IMR-90 (cell line): ENCODE measurements at regions of chr5 and their contacts with region 1.

Region 1: GRCh38 chr5:110371725-110372041 is 354.8 kb downstream of the TMEM232 start:
- DNase-seq: no peak
- ATAC-seq: no peak
- H3K4me3 ChIP-seq: no peak overlapping the region
- H3K27ac ChIP-seq: no peak overlapping the region
- H3K4me1 ChIP-seq: no peaks in the 10 kb centered on the region
- H3K27me3 ChIP-seq: no peaks in the 10 kb centered on the region
- CTCF ChIP-seq: no peak
- POLR2A ChIP-seq: no peak
- RAD21 ChIP-seq: no peak

Region 2: GRCh38 chr5:109936996-109937395 is 434.7 kb before region 1 on chr5:
- CTCF ChIA-PET with region 1: no interaction called
- POLR2A ChIA-PET with region 1: no interaction called
- dilution Hi-C with region 1: no loop called
- in situ Hi-C with region 1: no loop called
- intact Hi-C with region 1: loop called (anchors 5 kb)
- DNase-seq: no peak
- ATAC-seq: no peak
- H3K4me3 ChIP-seq: no peak overlapping the region
- H3K27ac ChIP-seq: no peak overlapping the region
- H3K4me1 ChIP-seq: no peaks in the 10 kb centered on the region
- H3K27me3 ChIP-seq: no peaks in the 10 kb centered on the region; the same call in 1 of the 2 replicates
- CTCF ChIP-seq: no peak
- POLR2A ChIP-seq: no peak
- RAD21 ChIP-seq: no peak

Region 3: DNA sequence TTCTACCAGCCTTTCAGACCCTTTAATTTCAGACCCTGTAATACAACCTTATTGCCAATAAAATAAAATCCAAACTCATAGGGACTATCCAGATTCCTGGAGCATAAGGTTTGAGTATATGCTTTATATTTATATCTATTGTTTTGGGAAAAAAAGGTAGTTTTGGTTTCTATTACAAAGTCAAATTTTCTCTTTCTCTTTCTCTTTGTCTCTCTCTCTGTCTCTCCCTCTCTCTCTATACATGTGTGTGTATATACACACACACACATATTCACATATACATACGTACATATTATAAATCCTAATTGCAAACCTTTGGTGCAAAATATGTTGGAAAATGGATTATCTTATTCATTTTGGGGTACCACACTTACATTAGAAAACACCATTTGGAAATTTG is 315.8 kb after region 1 on chr5:
- CTCF ChIA-PET with region 1: no interaction called
- POLR2A ChIA-PET with region 1: no interaction called
- dilution Hi-C with region 1: no loop called
- in situ Hi-C with region 1: no loop called
- intact Hi-C with region 1: no loop called
- DNase-seq: no peak
- ATAC-seq: no peak
- H3K4me3 ChIP-seq: no peak overlapping the region
- H3K27ac ChIP-seq: no peak overlapping the region
- H3K4me1 ChIP-seq: no peaks in the 10 kb centered on the region
- H3K27me3 ChIP-seq: no peaks in the 10 kb centered on the region
- CTCF ChIP-seq: no peak
- POLR2A ChIP-seq: no peak
- RAD21 ChIP-seq: no peak

Region 4: DNA sequence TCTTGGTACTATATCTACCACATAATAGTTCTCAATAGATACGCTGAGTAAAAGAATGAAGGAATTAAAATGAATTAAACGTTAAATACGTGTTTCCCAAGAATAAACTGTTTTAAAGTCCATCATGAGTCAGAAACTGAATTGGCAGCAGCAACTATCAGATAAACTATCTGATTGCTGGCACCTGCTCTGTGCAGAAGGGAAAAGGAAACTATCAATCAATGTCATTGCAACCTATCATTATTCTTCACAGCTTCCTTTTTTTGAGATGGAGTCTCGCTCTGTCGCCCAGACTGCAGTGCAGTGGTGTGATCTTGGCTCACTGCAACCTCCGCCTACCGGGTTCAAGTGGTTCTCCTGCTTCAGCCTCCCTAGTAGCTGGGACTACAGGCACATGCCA is 711.6 kb after region 1 on chr5:
- CTCF ChIA-PET with region 1: no interaction called
- POLR2A ChIA-PET with region 1: no interaction called
- dilution Hi-C with region 1: no loop called
- in situ Hi-C with region 1: no loop called
- intact Hi-C with region 1: no loop called
- DNase-seq: no peak
- ATAC-seq: no peak
- H3K4me3 ChIP-seq: no peak overlapping the region
- H3K27ac ChIP-seq: no peak overlapping the region
- H3K4me1 ChIP-seq: no peaks in the 10 kb centered on the region
- H3K27me3 ChIP-seq: no peaks in the 10 kb centered on the region
- CTCF ChIP-seq: no peak
- POLR2A ChIP-seq: no peak
- RAD21 ChIP-seq: no peak